Tibial artery (tissue), 4 donors: ENCODE measurements at regions of chr3 and their contacts with region 1.

Region 1: GRCh38 chr3:197186887-197187588 is 111.4 kb downstream of the DLG1 start:
- DNase-seq: no peak
- H3K4me3 ChIP-seq: no peak overlapping the region
- H3K27ac ChIP-seq: no peak overlapping the region
- H3K4me1 ChIP-seq: peaks cover 0 to 2% (median 0%) of the 10 kb centered on the region in 4 donors
- H3K27me3 ChIP-seq: no peaks in the 10 kb centered on the region
- CTCF ChIP-seq: peak; percentile 68 to 77

Region 2: DNA sequence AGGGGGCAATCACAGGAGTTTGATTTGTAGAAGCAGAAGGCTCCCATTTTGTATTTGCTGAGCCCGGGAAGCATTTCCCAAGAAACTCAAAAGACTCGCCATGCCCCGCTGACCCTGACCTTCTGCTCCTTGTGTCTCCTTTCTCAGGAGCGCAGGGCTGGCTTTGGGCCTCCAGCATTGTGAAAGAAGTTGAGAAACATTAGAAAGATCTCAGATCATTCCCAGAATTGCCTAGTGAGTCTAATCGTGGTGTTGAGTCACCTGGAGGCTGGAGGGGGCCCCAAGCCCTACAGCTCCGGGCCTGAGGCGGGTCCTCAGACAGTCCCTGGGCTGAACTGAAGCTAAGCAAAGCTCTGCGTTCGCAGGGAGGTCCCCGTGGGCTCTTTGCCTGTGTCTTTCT is 207.5 kb before region 1 on chr3:
- intact Hi-C with region 1: loop called (anchors 5 kb)
- DNase-seq: no peak
- H3K4me3 ChIP-seq: no peak overlapping the region
- H3K27ac ChIP-seq: no peak overlapping the region
- H3K4me1 ChIP-seq: no peaks in the 10 kb centered on the region
- H3K27me3 ChIP-seq: peaks cover 0 to 3% of the 10 kb centered on the region in 2 donors
- CTCF ChIP-seq: no peak